AG04450 (cell line): ENCODE measurements at regions of chr3 and their contacts with region 1.

Region 1: GRCh38 chr3:9932843-9933560 is 632 bp upstream of the CRELD1 start:
- DNase-seq: no peak
- H3K4me3 ChIP-seq: peak overlapping the region; percentile 77
- H3K27ac ChIP-seq: peak overlapping the region; percentile 93
- H3K27me3 ChIP-seq: no peaks in the 10 kb centered on the region
- CTCF ChIP-seq: peak; percentile 75

Region 2: DNA sequence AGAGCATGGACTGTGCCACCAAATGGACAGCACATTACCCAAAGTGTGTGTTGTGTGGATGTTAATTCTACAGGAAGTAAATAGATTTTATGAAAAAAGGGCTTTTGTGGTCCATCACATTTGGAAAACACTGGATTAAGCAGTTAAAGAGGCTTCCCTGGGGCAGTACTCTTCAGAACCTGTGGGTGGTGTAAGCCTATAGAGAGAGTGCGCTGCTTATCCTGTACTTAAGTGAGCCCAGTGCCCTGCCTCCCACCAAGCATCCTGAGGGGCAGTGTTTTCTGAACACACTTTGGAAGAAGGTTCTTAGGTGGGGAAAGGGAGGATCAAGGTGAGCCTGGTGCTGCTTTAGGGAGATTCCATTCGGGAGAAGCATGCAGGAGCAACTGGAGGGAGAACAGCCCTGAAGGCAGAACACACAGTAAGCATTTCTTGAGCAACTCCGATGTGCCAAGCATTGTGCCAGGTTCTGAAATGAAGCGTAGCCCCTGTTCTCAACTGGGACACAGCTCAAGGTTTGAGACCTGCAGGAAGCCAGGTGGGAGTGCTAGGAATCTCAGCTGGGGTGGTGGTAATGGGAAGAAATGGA is 112.0 kb before region 1 on chr3:
- CTCF ChIA-PET with region 1: no interaction called
- POLR2A ChIA-PET with region 1: no interaction called
- DNase-seq: no peak
- H3K4me3 ChIP-seq: no peak overlapping the region
- H3K27ac ChIP-seq: no peak overlapping the region
- H3K27me3 ChIP-seq: no peaks in the 10 kb centered on the region
- CTCF ChIP-seq: peak; percentile 52

Region 3: GRCh38 chr3:9843715-9844438 is 89.1 kb before region 1 on chr3 and contains the start of gene RPUSD3:
- CTCF ChIA-PET with region 1: interaction called, 10 read pairs
- POLR2A ChIA-PET with region 1: no interaction called
- DNase-seq: peak; percentile 90
- H3K4me3 ChIP-seq: peak within 1 kb of the TSS; percentile 94
- H3K27ac ChIP-seq: peak within 1 kb of the TSS; percentile 61
- H3K27me3 ChIP-seq: no peaks in the 10 kb centered on the region
- CTCF ChIP-seq: no peak
- polyA plus RNA-seq, gene RPUSD3: 29.0 and 34.2 TPM in 2 replicates

Region 4: DNA sequence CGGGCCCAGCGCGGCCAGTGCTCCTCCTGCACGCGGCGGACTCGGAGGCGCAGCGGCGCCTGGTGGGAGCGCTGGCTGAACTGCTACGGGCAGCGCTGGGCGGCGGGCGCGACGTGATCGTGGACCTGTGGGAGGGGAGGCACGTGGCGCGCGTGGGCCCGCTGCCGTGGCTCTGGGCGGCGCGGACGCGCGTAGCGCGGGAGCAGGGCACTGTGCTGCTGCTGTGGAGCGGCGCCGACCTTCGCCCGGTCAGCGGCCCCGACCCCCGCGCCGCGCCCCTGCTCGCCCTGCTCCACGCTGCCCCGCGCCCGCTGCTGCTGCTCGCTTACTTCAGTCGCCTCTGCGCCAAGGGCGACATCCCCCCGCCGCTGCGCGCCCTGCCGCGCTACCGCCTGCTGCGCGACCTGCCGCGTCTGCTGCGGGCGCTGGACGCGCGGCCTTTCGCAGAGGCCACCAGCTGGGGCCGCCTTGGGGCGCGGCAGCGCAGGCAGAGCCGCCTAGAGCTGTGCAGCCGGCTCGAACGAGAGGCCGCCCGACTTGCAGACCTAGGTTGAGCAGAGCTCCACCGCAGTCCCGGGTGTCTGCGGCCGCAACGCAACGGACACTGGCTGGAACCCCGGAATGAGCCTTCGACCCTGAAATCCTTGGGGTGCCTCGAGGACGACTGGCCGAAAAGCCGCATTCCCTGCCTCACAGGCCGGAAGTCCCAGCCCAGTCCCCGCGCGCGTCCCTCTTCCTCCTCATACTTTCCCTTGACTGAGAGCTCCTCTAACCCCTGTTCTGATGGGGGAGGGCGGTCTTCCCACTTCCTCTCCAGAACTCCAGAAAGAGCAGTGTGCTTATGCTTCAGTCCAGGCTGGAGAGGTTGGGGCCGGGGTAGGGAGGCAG is 17.5 kb before region 1 on chr3:
- CTCF ChIA-PET with region 1: interaction called, 17 read pairs
- POLR2A ChIA-PET with region 1: interaction called, 5 read pairs
- DNase-seq: no peak
- H3K4me3 ChIP-seq: peak overlapping the region; percentile 60
- H3K27ac ChIP-seq: peak overlapping the region; percentile 57
- H3K27me3 ChIP-seq: no peaks in the 10 kb centered on the region
- CTCF ChIP-seq: peak; percentile 46